Gastrocnemius medialis (tissue), 4 donors: ENCODE measurements at regions of chr4 and their contacts with region 1.

Region 1: DNA sequence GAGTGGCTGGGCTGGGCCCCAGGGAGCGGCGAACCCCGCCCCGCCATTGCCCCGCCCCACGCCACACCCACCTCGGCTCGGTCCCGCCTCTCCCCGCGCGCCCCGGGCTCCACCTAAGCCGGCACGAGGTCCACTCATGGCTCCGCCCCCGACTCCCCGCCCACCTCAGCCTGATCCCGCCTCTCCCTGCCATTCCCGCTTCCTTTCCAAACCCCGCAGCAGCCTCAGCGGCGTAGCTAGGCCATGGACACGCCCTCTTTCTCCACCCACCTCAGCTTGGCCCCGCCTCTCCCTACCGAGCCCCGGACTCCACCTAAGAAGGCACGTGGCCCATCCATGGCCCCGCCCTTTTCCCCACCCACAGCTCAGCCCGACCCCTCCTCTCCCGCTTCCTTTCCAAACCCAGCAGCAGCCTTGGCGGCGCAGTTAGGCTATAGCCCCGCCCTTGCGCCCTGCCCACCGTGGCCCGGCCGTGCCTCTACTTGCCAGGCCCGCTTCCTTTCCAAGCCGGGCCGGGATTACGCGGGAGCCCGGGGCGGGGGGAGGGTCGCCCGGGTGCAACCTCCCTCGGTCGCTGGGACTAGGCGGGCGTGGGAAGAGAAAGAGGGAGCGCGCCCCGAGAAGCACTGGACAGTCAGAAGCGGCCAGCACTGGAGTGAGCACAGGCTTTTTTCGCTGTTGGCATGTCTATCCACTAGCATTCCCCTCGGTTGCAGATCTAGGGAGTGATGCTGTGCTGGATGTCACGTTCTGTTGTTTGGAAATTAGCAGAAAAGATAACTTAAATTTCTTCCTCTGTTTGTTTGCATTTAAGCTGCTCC is at the start of gene RELL1:
- DNase-seq: peak; percentile 100
- ATAC-seq: peak; percentile 88 to 89
- H3K4me3 ChIP-seq: peak within 1 kb of the TSS; percentile 74 to 88 (median 82)
- H3K27ac ChIP-seq: peak within 1 kb of the TSS; percentile 96 to 100 (median 98)
- H3K4me1 ChIP-seq: peaks cover 28 to 35% of the 10 kb centered on the region in 2 donors
- H3K27me3 ChIP-seq: no peaks in the 10 kb centered on the region
- CTCF ChIP-seq: no peak
- POLR2A ChIP-seq: no peak
- total RNA-seq, gene RELL1: 13.7 to 36.3 (median 27.8) TPM

Region 2: GRCh38 chr4:37023504-37023903 is 663.1 kb before region 1 on chr4:
- in situ Hi-C with region 1: no loop called
- intact Hi-C with region 1: no loop called
- DNase-seq: no peak
- ATAC-seq: no peak
- H3K4me3 ChIP-seq: no peak overlapping the region
- H3K27ac ChIP-seq: no peak overlapping the region
- H3K4me1 ChIP-seq: no peaks in the 10 kb centered on the region
- H3K27me3 ChIP-seq: no peaks in the 10 kb centered on the region
- CTCF ChIP-seq: no peak
- POLR2A ChIP-seq: no peak

Region 3: GRCh38 chr4:37603070-37603468 is 83.5 kb before region 1 on chr4:
- in situ Hi-C with region 1: no loop called
- intact Hi-C with region 1: loop called (anchors 1 kb)
- DNase-seq: peak; percentile 63 to 78
- ATAC-seq: peak; percentile 84 to 93
- H3K4me3 ChIP-seq: no peak overlapping the region
- H3K27ac ChIP-seq: no peak overlapping the region
- H3K4me1 ChIP-seq: no peaks in the 10 kb centered on the region
- H3K27me3 ChIP-seq: no peaks in the 10 kb centered on the region
- CTCF ChIP-seq: peak; percentile 95 to 99 (median 98)
- POLR2A ChIP-seq: no peak

Region 4: DNA sequence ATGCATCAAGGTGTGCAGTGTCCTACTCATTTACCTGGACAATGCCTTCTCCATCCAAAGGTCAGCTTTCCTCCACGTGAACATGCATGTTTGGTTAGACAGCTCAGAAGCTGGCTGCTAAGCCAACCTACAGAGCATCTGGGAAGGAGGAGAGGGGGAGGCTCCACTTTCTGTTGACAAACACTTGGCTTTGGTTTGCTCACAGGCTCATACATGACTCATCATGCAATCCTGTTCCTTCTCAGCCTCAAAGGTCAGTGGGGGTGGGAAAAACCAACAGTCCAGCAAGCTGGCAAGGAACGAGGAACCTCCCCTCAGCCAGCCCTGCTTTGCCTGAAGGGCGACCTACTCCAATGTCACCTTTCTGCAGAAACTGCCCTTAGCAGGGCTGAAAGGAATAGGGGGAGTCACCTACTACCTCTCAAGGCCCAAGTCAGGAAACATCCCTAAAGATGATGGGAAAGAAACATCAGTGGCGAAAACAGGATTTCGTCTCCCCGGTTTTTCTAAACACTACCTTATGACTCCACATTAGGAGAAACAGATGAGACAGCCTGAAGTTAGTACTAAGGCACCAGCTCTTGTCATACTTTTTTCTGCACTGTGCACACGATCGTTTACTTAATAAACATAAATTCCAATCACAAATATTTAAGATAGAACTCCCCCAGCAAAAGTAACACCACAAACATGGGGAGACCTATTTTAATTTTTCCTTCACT is 38.3 kb before region 1 on chr4:
- in situ Hi-C with region 1: no loop called
- intact Hi-C with region 1: loop called (anchors 1 kb)
- DNase-seq: peak; percentile 85 to 91
- ATAC-seq: peak; percentile 99 to 100
- H3K4me3 ChIP-seq: no peak overlapping the region
- H3K27ac ChIP-seq: peak overlapping the region; percentile 67 to 83 (median 77)
- H3K4me1 ChIP-seq: peaks cover 17 to 35% of the 10 kb centered on the region in 2 donors
- H3K27me3 ChIP-seq: no peaks in the 10 kb centered on the region
- CTCF ChIP-seq: no peak
- POLR2A ChIP-seq: no peak

Region 5: DNA sequence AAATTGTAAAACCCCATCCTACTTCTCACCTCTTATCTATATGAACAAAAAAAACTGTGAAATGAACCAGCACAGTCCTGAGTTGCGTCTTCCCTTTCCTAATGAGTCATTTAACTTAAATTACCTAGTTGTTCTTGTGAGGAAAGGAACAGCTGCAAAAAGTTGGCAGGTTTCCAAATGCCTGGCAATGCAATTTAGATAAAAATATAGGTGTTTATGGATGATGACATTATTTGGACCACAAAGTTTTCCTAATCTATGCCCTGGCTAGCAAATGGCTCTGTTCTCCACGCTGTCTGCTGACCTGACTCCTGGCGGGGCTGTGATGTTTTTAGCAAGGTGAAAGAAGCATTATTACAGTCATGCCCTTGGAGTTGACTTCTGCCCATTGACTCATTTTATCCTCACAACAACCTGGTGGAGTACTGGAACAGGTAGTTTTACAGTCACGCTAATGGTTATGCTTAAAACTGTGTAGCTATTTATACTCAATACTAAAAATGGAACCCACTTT is 29.4 kb after region 1 on chr4:
- in situ Hi-C with region 1: no loop called
- intact Hi-C with region 1: loop called (anchors 1 kb)
- DNase-seq: peak; percentile 83 to 89
- ATAC-seq: peak; percentile 97 to 98
- H3K4me3 ChIP-seq: no peak overlapping the region
- H3K27ac ChIP-seq: peak overlapping the region; percentile 68 to 83 (median 80)
- H3K4me1 ChIP-seq: peaks cover 10 to 13% of the 10 kb centered on the region in 2 donors
- H3K27me3 ChIP-seq: no peaks in the 10 kb centered on the region
- CTCF ChIP-seq: no peak
- POLR2A ChIP-seq: peak in 1 of 2 donors; percentile 29

Region 6: GRCh38 chr4:37726666-37727065 is 40.1 kb after region 1 on chr4:
- in situ Hi-C with region 1: no loop called
- intact Hi-C with region 1: no loop called
- DNase-seq: no peak
- ATAC-seq: no peak
- H3K4me3 ChIP-seq: no peak overlapping the region
- H3K27ac ChIP-seq: no peak overlapping the region
- H3K4me1 ChIP-seq: no peaks in the 10 kb centered on the region
- H3K27me3 ChIP-seq: no peaks in the 10 kb centered on the region
- CTCF ChIP-seq: no peak
- POLR2A ChIP-seq: no peak

Region 7: DNA sequence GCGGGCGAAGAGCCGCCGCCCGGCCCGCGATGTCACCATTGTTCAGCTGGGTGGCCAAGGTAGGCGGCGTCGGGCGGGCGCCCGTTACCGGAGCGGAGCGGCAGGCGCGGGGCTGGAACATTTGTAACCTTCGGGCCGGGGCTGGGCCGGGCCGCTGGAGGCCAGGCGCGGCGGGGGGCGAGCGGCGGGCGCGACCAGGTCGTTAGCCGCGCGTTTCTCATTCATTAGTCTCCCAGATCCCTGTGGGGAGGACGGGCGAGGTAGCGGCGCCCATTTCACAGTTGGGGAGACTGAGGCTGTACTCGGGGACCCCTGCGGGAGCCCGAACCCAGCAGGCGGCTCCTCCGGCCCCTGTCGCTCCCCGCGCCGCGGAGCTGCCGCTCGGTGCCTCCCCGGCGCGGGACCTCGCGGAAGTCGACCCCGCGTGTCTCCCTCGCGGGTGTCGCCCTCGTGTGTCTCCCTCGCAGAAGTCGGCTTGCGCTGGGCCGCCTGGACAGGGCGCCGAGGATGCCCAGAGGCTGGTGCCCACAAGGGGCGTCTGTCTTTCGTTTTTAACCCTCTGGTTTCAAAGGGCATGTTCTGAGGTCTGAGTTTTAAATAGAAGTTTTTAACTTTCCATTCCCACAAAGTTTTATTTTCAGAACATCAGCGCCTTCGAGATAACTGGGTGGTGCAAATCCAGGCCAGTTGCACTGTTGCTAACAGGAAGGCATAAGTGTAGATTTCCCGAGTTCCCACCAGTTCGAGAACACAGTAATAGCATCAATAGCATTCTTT is 291.1 kb after region 1 on chr4:
- in situ Hi-C with region 1: no loop called
- intact Hi-C with region 1: loop called (anchors 5 kb)
- DNase-seq: peak; percentile 47 to 68
- ATAC-seq: peak; percentile 76 to 89
- H3K4me3 ChIP-seq: peak overlapping the region; percentile 63 to 83 (median 64)
- H3K27ac ChIP-seq: peak overlapping the region; percentile 79 to 92 (median 85)
- H3K4me1 ChIP-seq: peaks cover 24 to 30% of the 10 kb centered on the region in 2 donors
- H3K27me3 ChIP-seq: no peaks in the 10 kb centered on the region
- CTCF ChIP-seq: peak; percentile 62 to 86 (median 78)
- POLR2A ChIP-seq: peak; percentile 25 to 54

Region 8: DNA sequence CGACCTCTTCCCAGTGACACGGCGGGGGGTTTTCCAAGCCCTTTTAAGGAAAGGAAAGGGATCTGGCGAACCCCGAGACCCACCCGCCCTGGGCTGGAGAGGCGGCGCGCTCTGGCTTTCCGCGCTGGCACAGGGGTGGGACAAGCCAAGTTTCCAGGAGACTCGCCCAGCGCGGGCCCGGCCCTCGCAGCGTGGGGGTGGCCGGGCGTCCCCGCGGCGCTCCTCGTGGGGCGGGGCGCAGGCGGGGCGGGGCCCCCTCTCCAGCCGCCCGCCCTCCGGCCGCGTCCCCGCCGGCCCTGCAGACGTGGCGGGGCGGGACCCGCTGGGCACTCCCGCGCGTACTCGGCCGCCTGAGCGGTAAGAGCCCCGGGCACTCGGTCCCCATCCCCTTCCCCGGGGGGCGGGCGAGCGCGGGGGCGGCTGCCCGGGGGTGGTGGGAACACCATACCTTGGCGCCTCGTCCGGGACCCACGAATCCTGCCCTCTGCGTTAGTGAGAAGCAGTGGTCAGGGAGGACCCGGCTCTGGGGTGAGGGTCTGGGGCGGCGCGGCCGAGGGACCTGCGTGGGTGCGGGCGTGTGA is 1181.0 kb after region 1 on chr4 and contains the start of gene FAM114A1:
- in situ Hi-C with region 1: no loop called
- intact Hi-C with region 1: loop called (anchors 10 kb)
- DNase-seq: peak; percentile 42 to 61
- ATAC-seq: peak; percentile 77 to 78
- H3K4me3 ChIP-seq: peak within 1 kb of the TSS; percentile 69 to 83 (median 75)
- H3K27ac ChIP-seq: peak within 1 kb of the TSS; percentile 78 to 89 (median 82)
- H3K4me1 ChIP-seq: peaks cover 19 to 23% of the 10 kb centered on the region in 2 donors
- H3K27me3 ChIP-seq: no peaks in the 10 kb centered on the region
- CTCF ChIP-seq: no peak
- POLR2A ChIP-seq: peak; percentile 45 to 47
- total RNA-seq, gene FAM114A1: 23.2 to 47.5 (median 27.4) TPM